ENCODE measurements at regions of chr7 and their contacts with region 1.

Region 1: DNA sequence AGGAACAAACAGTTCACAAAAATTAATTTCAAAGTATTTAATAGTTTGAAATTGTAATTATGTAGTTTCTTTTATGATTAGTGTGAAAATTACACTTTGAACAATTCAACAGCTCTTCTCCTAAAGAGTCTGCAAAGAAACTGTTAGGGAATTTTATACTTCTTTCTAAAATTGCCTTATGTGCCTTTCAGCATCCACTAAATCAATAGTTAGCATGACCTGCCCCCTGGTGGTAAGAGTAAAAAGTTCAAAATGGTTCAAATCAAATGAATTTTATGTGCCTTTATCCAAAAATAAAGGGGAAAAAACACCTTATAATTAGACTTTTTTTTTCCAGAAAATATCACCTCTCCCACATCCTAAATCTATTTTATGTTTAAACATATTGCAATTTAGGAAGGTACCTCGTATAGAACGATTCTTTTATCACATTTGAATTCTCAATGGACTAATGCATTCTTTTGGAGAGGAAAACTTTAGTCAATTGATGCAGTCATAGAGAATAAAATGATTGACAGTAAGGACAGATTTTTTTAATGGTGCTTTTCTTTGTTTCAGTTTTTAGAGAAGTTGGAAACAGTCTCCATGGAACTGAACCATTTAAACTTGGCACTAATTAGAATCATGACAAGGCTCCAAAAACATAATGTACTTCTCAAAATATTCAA is 163.7 kb downstream of the SEMA3D start:
- DNase-seq: no peak
- ATAC-seq: no peak

Region 2: DNA sequence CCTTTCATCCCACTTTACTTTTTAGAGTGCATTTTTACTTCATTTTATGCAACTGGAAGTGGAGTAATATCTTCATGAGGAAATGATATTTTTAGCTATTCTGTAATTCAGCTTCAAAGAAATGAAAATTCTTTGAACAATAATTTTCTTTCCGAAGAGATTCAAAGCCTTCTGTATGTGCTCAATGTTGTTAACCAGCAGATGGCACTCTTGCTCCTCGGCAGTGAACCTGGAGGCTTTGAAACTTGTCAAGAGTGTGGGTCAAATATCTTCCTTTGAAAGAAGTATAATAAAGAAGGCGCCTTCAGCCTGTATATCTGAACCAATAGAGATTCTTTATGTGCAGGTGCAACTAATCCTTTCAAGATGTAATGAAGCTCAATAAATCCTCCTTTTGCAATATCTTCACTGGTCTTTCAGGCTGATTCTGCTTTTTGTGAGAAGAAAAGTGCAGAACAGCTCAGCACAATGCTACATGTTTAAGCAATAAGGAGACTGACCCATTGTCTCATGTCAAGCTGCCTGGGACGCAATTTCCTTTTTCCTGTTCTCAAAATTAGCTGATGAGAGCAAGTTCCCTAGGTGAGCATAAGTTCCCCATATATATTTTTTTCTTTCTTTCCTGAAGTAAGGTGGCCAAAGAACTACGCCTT is 1087.0 kb before region 1 on chr7:
- intact Hi-C with region 1: loop called (anchors 2 kb)
- DNase-seq: no peak
- ATAC-seq: no peak

Region 3: GRCh38 chr7:83976295-83976694 is 1046.9 kb before region 1 on chr7:
- intact Hi-C with region 1: loop called (anchors 5 kb)
- DNase-seq: no peak
- ATAC-seq: no peak

Region 4: GRCh38 chr7:84194543-84195271 is 828.5 kb before region 1 on chr7 and contains the start of gene SEMA3A:
- intact Hi-C with region 1: loop called (anchors 10 kb)
- DNase-seq: no peak
- ATAC-seq: peak; percentile 76
- total RNA-seq, gene SEMA3A: 1.7 TPM

Region 5: GRCh38 chr7:84916161-84916560 is 107.0 kb before region 1 on chr7:
- intact Hi-C with region 1: loop called (anchors 2 kb)
- DNase-seq: no peak
- ATAC-seq: no peak